ENCODE measurements at regions of chr13 and their contacts with region 1.

Region 1: DNA sequence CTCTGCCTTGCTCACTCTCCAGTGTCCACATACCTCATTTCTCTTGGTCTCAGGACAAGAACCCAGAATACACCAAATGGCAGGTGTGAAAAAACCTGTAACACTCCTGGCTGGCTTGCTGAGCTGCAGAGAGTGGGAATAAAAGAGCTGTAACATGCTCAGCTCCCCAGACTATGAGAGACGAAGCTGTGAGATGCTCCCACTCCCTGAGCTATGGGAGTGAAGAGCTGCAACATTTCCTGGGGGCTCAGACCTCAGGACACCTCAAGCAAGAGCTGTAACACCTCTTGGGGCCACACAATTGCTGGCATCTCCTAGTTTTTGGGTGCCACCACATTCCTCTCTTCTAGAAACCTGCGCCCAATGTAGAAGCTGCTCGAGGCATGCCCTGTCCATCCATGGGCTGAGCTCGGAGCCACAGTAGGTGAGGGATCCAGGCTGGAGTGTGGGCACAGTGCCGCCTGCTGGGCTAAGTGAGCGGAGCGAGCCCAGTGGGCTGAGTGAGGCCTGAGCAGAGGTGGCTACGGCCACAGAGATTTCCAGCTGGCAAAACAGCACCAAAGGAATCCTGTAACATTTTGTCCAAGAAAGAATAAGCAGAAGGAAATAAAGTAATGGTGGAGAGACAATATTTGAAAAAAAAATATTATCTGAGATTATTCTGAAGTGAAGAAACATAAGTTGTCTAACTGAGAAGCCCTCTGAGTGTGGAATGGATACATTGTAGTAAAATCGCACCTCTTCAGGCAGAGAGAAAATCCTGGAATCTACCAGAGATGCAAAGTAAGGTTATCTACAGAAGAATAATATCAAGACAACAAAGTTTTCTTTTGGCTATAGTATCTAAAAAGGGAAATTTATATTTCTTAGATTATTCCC is 186.2 kb upstream of the PCDH9 start:
- DNase-seq: peak; percentile 2
- H3K4me3 ChIP-seq: no peak overlapping the region
- H3K27ac ChIP-seq: no peak overlapping the region
- H3K4me1 ChIP-seq: no peaks in the 10 kb centered on the region
- H3K27me3 ChIP-seq: no peaks in the 10 kb centered on the region
- CTCF ChIP-seq: peak; percentile 73 to 80

Region 2: DNA sequence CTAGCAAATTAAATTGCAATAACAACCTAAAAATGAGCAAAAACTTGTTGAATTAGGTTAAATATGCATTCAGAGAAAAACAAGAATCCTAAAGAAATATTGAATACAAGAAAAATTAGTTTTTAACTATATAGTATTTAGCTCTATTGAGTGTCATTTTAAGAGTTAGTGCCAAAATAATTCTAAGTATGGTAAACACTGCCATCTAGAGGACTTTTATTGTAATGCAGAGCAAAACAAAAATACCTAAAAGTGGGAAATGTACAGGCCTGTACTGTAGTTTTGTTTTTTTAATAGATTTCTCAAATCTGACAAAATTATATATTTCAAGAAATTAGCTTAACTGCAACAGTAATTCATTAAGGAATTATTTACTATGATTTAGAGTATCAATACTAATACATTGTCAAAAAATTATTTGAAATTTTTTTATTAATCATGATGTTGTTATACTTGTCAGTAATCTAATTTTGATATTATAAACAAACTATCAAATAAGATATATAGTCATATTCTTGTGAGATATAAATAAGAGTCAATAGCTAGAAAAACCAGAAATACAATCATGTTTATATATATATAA is 177.9 kb before region 1 on chr13:
- CTCF ChIA-PET with region 1: interaction called, 10 read pairs
- dilution Hi-C with region 1: no loop called
- in situ Hi-C with region 1: no loop called
- intact Hi-C with region 1: loop called (anchors 10 kb)
- DNase-seq: peak; percentile 9
- H3K4me3 ChIP-seq: no peak overlapping the region
- H3K27ac ChIP-seq: no peak overlapping the region
- H3K4me1 ChIP-seq: no peaks in the 10 kb centered on the region
- H3K27me3 ChIP-seq: no peaks in the 10 kb centered on the region
- CTCF ChIP-seq: peak; percentile 54 to 60